T-cell (primary cell): ENCODE measurements at regions of chr14 and their contacts with region 1.

Region 1: DNA sequence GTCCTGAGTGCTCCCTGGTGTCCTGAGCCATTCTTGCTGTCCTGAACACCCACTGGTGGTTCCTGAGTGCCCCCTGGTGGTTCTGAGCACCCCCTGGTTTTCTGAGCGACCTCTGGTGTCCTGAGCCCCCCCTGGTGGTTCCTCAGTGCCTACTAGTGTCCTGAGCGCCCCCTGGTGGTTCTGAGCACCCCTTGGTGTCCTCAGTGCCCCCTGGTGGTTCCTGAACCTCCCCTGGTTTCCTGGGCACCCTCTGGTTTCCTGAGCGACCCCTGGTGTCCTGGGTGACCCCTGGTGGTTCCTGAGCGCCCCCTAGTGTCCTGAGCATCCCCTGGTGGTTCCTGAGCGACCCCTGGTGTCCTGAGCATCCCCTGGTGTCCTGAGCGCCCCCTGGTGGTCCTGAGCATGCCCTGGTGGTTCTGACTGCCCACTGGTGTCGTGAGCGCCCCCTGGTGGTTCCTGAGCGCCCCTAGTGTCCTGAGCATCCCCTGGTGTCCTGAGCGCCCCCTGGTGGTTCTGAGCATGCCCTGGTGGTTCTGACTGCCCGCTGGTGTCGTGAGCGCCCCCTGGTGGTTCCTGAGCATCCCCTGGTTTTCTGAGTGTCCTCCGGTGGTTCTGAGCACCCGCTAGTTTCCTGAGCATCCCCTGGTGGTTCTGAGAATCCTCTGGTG is 473.1 kb downstream of the TMEM121 start:
- DNase-seq: peak in 34 of 35 experiments; percentile 39 to 87 (median 67)
- ATAC-seq: peak in 3 of 4 experiments; percentile 59 to 72 (median 66)
- H3K4me3 ChIP-seq: no peak overlapping the region
- H3K4me3 Mint-ChIP-seq: peak overlapping the region in 1 of 3 donors; percentile 63
- H3K27ac ChIP-seq: no peak overlapping the region
- H3K27ac Mint-ChIP-seq: peak overlapping the region; percentile 23 to 44
- H3K4me1 ChIP-seq: peaks cover 23 to 25% of the 10 kb centered on the region in 2 experiments
- H3K4me1 Mint-ChIP-seq: peaks cover 34 to 53% (median 49%) of the 10 kb centered on the region in 3 donors
- H3K27me3 ChIP-seq: peaks cover 0 to 8% of the 10 kb centered on the region in 2 experiments
- H3K27me3 Mint-ChIP-seq: no peaks in the 10 kb centered on the region

Region 2: GRCh38 chr14:105944632-105945610 is 54.6 kb before region 1 on chr14:
- CTCF ChIA-PET with region 1: no interaction called
- POLR2A ChIA-PET with region 1: no interaction called
- DNase-seq: peak; percentile 29 to 79 (median 61)
- ATAC-seq: peak; percentile 77 to 83 (median 80)
- H3K4me3 ChIP-seq: no peak overlapping the region
- H3K4me3 Mint-ChIP-seq: no peak overlapping the region
- H3K27ac ChIP-seq: no peak overlapping the region
- H3K27ac Mint-ChIP-seq: no peak overlapping the region
- H3K4me1 ChIP-seq: peaks cover 2 to 19% of the 10 kb centered on the region in 2 experiments
- H3K4me1 Mint-ChIP-seq: peaks cover 21 to 26% (median 21%) of the 10 kb centered on the region in 3 donors
- H3K27me3 ChIP-seq: peaks cover 0 to 28% of the 10 kb centered on the region in 2 experiments
- H3K27me3 Mint-ChIP-seq: peaks cover 3 to 9% of the 10 kb centered on the region in 2 donors

Region 3: DNA sequence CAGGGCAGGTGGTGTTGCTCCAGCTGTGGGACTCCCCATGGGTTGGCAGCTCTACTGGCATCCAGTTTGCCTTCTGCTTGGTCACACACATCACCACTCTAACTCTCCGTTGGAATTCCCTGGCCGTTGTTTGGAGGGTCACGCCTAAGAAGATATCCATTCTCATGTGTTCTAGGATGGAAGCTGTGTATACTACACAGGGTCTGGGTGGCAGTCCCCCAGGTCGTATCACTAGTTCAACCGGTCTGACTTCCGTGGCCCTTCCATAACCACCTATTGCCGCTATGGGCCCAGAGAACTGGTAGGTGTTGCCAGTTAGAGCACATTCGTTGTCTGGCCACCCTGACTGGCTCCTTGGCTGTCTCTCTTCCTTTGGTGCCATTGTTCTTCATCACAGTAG is 16.8 kb before region 1 on chr14:
- CTCF ChIA-PET with region 1: interaction called in 1 of 2 experiments, 11 read pairs
- POLR2A ChIA-PET with region 1: interaction called in 1 of 2 experiments, 6 read pairs
- DNase-seq: no peak
- ATAC-seq: no peak
- H3K4me3 ChIP-seq: no peak overlapping the region
- H3K4me3 Mint-ChIP-seq: peak overlapping the region in 1 of 3 donors; percentile 13
- H3K27ac ChIP-seq: no peak overlapping the region
- H3K27ac Mint-ChIP-seq: peak overlapping the region; percentile 78 to 84
- H3K4me1 ChIP-seq: peaks cover 24 to 56% of the 10 kb centered on the region in 2 experiments
- H3K4me1 Mint-ChIP-seq: peaks cover 60 to 69% (median 62%) of the 10 kb centered on the region in 3 donors
- H3K27me3 ChIP-seq: no peaks in the 10 kb centered on the region
- H3K27me3 Mint-ChIP-seq: no peaks in the 10 kb centered on the region